Calu3 (cell line): ENCODE measurements at regions of chr17 and their contacts with region 1.

Region 1: DNA sequence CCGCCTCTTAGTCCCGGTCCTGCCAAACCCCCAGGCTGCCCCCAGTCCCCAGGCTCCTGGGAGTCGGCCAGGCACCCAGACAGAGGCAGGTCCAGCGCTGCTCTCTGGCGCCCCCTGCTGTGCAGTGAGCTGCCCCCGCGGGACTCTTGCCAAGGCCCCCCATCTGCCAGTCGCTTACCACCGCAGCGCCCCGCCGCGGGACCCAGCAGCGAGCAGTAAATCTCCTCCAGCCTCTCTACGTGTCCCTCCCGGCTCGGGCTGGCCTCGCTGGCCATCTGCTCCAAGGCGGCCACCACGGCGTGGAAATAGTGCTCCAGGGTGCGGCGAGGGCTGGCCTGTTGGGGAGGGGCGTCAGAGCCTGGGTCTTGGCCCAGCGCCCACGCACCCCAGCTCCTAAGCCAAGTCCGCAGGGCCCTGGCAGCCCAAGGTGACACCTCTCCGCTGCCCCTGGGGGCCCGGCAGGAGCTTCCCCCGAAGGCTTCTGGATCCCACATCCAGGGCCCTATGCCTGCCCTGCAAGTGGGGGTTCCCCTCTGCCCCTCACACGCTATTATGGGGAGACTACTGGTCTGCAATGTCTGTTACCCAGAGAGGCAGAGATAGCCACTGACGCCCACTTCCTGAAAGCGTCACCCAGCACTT is 33.7 kb upstream of the MFSD6L start:
- DNase-seq: peak; percentile 8
- H3K4me3 Mint-ChIP-seq: no peak overlapping the region
- H3K27ac Mint-ChIP-seq: no peak overlapping the region
- H3K4me1 Mint-ChIP-seq: peaks cover 10% of the 10 kb centered on the region
- H3K27me3 Mint-ChIP-seq: peaks cover 26% of the 10 kb centered on the region
- CTCF ChIP-seq: peak; percentile 9

Region 2: GRCh38 chr17:9253308-9253707 is 420.5 kb after region 1 on chr17:
- CTCF ChIA-PET with region 1: interaction called, 10 read pairs
- intact Hi-C with region 1: no loop called
- DNase-seq: no peak
- H3K4me3 Mint-ChIP-seq: no peak overlapping the region
- H3K27ac Mint-ChIP-seq: no peak overlapping the region
- H3K4me1 Mint-ChIP-seq: no peaks in the 10 kb centered on the region
- H3K27me3 Mint-ChIP-seq: no peaks in the 10 kb centered on the region
- CTCF ChIP-seq: no peak